ENCODE measurements at regions of chr2 and their contacts with region 1.

Region 1: DNA sequence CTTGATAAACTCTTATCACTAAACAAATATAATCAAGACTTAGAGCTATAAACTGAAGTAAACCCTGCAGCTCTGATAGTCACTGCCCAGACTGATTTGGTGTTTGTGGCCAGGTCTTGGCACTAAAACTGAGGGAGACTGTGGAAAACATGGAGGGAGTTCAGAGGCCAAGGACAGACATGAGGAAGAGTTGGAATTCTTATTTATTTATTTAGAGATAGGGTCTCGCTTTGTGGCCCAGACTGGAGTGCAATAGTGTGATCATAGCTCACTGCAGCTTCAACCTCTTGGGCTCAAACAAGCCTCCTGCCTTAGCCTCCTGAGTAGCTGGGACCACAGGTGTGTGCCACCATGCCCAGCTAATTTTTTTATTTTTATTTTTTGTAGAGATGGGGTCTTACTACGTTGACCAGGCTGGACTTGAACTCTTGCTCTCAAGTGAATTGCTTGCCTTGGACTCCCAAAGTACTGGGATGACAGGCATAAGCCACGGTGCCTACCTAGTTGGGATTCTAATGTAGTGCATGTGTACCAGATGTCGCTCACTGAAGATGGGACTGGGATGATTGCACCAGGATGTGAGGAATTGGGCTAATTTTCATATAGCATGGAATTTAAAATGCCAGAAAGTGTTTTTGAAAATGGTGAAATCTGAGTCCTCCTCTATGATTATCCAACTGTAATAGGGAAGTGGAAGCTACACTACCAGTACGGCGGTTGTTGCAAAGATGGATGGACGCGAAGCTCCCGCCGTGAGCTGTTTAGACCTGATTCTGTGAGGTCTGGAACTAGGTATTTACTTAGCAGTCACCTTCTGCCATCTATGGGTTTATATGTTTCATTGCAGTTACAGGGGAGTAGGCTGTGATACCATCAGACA is 52.7 kb upstream of the CTLA4 start:
- DNase-seq: peak; percentile 64
- ATAC-seq: peak; percentile 86

Region 2: DNA sequence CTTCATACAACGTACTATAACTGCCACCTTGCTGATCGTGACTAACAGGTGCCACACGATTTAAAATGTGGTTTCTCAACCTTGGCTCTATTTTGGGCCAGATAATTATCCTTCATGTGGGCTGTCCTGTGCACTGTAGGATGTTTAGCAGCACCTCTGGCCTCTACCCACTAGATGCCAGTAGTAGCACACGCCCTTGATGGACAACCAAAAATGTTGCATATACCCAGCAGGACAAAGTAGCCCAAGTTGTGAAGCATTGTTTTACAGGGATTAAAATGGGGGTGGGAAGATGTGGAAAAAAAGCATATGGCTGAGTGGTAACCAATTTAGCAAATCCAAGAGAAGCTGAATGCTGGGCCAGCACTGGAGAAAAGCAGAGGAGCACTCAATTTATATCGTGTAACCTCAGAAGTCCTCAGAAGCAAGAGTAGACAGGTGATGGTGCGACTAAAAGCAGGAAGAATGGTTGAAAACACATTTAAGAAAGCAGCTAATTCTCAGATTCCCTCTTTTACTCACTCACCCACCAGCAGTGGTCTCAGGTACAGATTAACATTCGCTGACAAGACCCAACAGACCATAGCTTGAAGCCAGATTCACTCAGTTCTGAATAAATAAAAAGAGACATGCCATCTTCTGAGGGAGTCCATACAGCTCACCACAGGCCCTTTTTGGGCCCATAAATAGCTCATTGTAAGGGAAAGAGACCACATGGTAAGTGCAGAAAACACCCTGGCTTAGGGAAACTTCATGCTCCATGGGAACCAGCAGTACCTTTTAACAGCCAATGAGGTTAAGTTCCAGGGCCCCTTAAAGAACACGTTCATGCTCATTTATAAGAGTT is 330.4 kb before region 1 on chr2:
- intact Hi-C with region 1: loop called (anchors 5 kb)
- DNase-seq: no peak
- ATAC-seq: peak; percentile 91

Region 3: DNA sequence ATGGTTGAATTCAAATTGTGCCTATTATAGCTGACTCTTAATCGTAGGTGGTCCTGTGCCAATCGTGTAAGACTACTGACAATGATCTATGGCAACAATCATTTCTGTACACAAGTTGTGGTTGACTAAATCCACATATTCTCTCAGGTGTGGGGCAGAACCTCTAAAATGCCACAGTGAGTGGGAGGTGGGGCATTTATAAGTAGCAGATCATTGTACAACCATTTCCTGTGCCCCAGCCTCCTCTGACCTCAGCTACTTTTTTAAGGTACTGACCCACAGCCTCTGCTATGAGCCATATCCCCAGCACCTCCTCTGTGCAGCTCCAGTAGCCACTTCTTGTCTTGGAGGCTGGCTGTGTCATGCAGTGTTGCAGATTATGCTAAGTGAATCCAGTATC is 231.2 kb before region 1 on chr2:
- intact Hi-C with region 1: no loop called
- DNase-seq: no peak
- ATAC-seq: peak; percentile 88

Measured in left ventricle myocardium superior (tissue), 1 donor.